K562 (cell line): ENCODE measurements at regions of chr3 and their contacts with region 1.

Region 1: DNA sequence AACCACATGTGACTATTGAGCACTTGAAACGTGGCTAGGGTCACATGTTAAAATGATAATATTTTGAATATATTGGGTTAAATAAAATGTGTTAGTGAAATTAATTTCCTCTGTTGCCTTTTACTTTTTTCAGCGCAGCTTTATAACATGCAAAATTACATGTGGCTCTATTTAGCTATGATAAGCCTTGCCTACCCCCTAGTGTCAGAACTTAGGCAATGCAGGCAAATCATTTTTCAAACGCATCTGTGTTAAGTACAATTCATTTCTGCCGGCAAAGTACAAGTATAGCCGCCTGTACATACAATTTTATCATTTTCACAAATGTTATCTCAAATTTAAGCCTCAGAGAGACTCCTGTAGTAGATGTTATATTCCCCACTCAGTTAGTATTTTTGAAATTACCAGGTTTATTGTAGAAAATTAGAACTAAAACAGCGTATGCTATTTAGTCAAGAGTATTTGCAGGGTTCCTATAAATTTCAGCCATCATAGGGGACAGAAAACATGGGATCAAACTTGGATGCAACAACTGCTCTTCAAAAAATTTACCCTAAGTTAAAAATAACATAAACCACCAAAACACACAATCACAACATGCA is 56.1 kb downstream of the TAFA4 start:
- DNase-seq: peak; percentile 14 to 55 (median 43)
- ATAC-seq: peak; percentile 79
- H3K4me3 ChIP-seq: no peak overlapping the region
- H3K27ac ChIP-seq: no peak overlapping the region
- H3K4me1 ChIP-seq: no peaks in the 10 kb centered on the region
- H3K27me3 ChIP-seq: no peaks in the 10 kb centered on the region
- CTCF ChIP-seq: peak; percentile 47 to 77 (median 63); a peak in 5 of 6 replicates
- EP300 ChIP-seq: no peak
- POLR2A ChIP-seq: no peak
- RAD21 ChIP-seq: peak; percentile 75 to 84

Region 2: DNA sequence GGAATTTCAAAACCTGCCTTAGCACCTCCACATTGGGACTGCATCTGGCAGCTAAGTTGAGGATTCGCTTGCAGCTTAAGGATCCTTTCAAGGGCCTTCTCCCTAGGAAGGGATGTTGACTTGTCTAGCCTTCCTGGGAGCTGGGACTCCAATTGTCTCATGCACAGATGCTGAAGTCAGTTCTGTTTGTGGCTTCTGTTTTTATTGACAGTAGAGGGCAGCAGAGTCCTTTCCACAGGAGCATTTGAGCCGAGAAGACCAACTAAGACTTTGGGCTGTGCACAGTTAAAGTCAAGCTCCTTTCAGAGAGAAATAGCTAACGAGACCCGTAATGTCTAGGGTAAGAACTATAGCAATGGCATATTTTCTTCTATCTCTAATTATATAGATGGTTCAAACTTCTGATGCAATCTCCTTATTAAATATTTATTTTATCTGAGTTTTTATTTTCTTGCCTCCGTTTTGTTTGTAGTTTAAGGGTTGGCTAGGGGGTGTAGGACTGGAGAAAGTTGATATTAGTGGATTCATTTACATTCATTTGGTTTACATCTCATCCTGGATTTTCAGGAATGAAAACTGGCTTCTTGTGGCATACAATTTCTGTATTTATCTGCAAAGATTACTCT is 1937.8 kb before region 1 on chr3:
- CTCF ChIA-PET with region 1: interaction called, 5 read pairs
- POLR2A ChIA-PET with region 1: no interaction called
- in situ Hi-C with region 1: loop called (anchors 25 kb)
- intact Hi-C with region 1: loop called (anchors 5 kb)
- DNase-seq: peak; percentile 18 to 64 (median 24)
- ATAC-seq: peak; percentile 89
- H3K4me3 ChIP-seq: no peak overlapping the region
- H3K27ac ChIP-seq: no peak overlapping the region
- H3K4me1 ChIP-seq: no peaks in the 10 kb centered on the region
- H3K27me3 ChIP-seq: peaks cover 0 to 6% of the 10 kb centered on the region in 2 experiments; a peak in 1 of 5 replicates
- CTCF ChIP-seq: peak; percentile 60 to 65 (median 64)
- EP300 ChIP-seq: no peak
- POLR2A ChIP-seq: no peak
- RAD21 ChIP-seq: peak; percentile 71 to 79

Region 3: DNA sequence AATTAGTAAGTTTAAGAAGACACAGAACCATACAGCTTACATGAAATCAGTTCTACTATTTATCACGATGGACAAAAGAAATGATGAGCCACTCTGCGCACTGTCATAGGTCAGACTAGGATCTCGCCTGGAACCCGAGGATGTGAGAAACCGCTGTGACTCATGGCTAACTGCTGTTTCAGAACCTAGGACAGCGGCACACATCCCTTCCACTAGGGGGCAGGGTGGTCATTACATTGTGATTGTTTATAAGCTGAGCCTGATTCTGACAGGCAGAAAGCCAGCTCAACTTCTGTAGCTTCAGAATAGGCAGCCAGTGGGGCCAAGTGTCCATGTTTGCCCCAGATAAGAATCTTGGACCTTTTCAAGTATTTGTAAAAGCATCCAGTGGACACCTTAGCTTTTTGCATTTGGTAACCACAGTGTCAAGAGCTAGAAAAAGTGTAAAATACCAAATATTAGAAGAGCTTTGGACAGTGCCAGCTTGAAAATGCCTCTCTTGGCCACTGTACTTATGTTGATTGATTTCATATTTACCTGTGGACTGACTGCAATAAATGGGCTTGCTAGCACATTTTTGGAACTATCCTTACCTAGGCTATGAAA is 1762.3 kb before region 1 on chr3:
- CTCF ChIA-PET with region 1: no interaction called
- POLR2A ChIA-PET with region 1: no interaction called
- in situ Hi-C with region 1: no loop called
- intact Hi-C with region 1: loop called (anchors 5 kb)
- DNase-seq: peak; percentile 65 to 81 (median 74)
- ATAC-seq: peak; percentile 98
- H3K4me3 ChIP-seq: no peak overlapping the region
- H3K27ac ChIP-seq: no peak overlapping the region
- H3K4me1 ChIP-seq: no peaks in the 10 kb centered on the region
- H3K27me3 ChIP-seq: no peaks in the 10 kb centered on the region
- CTCF ChIP-seq: peak; percentile 82 to 92 (median 86)
- EP300 ChIP-seq: no peak
- POLR2A ChIP-seq: no peak
- RAD21 ChIP-seq: peak; percentile 63 to 84; a peak in 3 of 4 replicates

Region 4: GRCh38 chr3:67357610-67358458 is 1518.4 kb before region 1 on chr3:
- CTCF ChIA-PET with region 1: no interaction called
- POLR2A ChIA-PET with region 1: no interaction called
- in situ Hi-C with region 1: loop called (anchors 25 kb)
- intact Hi-C with region 1: no loop called
- DNase-seq: peak in 2 of 4 experiments; percentile 13 to 28
- ATAC-seq: peak; percentile 76
- H3K4me3 ChIP-seq: no peak overlapping the region
- H3K27ac ChIP-seq: no peak overlapping the region
- H3K4me1 ChIP-seq: peaks cover 0 to 6% of the 10 kb centered on the region in 2 experiments; a peak in 1 of 5 replicates
- H3K27me3 ChIP-seq: no peaks in the 10 kb centered on the region
- CTCF ChIP-seq: peak; percentile 35 to 49 (median 37); a peak in 5 of 6 replicates
- EP300 ChIP-seq: no peak
- POLR2A ChIP-seq: no peak
- RAD21 ChIP-seq: peak in 1 of 2 experiments; percentile 45; a peak in 2 of 4 replicates

Region 5: DNA sequence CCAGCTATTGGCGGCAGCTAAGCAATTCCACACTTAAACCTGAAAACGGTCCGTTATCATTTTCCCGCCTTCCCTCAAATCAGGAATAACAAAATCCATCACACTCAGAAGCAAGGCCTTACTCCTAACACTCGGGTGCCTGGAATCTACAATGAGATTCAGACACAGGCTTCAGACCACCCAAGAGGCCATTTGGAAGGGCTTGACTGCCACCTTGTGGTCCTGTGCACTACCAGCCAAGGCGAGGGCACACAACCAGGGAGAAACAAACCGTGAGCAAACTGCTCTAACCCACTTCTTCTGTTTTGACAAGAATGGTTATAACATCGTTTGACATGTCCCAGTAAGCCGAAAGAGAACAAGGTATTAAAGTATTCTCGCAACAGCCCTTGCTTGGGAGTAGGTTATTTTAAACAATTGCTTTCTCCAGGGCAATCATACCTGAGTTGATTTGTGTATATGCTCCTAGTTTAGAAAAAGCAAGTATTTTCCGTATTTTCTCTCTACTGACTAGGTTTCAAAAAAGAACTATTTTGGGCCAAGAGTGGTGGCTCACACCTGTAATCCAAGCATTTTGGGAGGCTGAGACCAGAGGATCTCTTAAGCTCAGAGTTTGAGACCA is 96.3 kb after region 1 on chr3:
- CTCF ChIA-PET with region 1: no interaction called
- POLR2A ChIA-PET with region 1: no interaction called
- in situ Hi-C with region 1: no loop called
- intact Hi-C with region 1: loop called (anchors 5 kb)
- DNase-seq: peak; percentile 33 to 69 (median 42)
- ATAC-seq: peak; percentile 98
- H3K4me3 ChIP-seq: no peak overlapping the region
- H3K27ac ChIP-seq: no peak overlapping the region
- H3K4me1 ChIP-seq: no peaks in the 10 kb centered on the region
- H3K27me3 ChIP-seq: no peaks in the 10 kb centered on the region; a peak in 2 of 5 replicates
- CTCF ChIP-seq: peak; percentile 72 to 80 (median 75)
- EP300 ChIP-seq: no peak
- POLR2A ChIP-seq: no peak
- RAD21 ChIP-seq: peak; percentile 63 to 78